Activated CD4-positive, alpha-beta T cell treated with anti-CD3 and anti-CD28 coated beads for 36 hours (primary cell): ENCODE measurements at regions of chr9 and their contacts with region 1.

Region 1: GRCh38 chr9:34376596-34377403 is at the start of gene MYORG:
- DNase-seq: peak; percentile 98
- ATAC-seq: peak; percentile 82
- H3K4me3 Mint-ChIP-seq: peak within 1 kb of the TSS; percentile 76
- H3K27ac Mint-ChIP-seq: peak within 1 kb of the TSS; percentile 62
- H3K4me1 Mint-ChIP-seq: peaks cover 36% of the 10 kb centered on the region
- H3K27me3 Mint-ChIP-seq: no peaks in the 10 kb centered on the region
- total RNA-seq, gene MYORG: 2.2 to 2.3 TPM

Region 2: GRCh38 chr9:34048923-34049697 is 327.7 kb before region 1 on chr9:
- CTCF ChIA-PET with region 1: interaction called, 3 read pairs
- POLR2A ChIA-PET with region 1: no interaction called
- intact Hi-C with region 1: loop called (anchors 1 kb)
- DNase-seq: peak; percentile 98
- ATAC-seq: peak; percentile 84
- H3K4me3 Mint-ChIP-seq: peak overlapping the region; percentile 90
- H3K27ac Mint-ChIP-seq: peak overlapping the region; percentile 99
- H3K4me1 Mint-ChIP-seq: peaks cover 38% of the 10 kb centered on the region
- H3K27me3 Mint-ChIP-seq: no peaks in the 10 kb centered on the region

Region 3: DNA sequence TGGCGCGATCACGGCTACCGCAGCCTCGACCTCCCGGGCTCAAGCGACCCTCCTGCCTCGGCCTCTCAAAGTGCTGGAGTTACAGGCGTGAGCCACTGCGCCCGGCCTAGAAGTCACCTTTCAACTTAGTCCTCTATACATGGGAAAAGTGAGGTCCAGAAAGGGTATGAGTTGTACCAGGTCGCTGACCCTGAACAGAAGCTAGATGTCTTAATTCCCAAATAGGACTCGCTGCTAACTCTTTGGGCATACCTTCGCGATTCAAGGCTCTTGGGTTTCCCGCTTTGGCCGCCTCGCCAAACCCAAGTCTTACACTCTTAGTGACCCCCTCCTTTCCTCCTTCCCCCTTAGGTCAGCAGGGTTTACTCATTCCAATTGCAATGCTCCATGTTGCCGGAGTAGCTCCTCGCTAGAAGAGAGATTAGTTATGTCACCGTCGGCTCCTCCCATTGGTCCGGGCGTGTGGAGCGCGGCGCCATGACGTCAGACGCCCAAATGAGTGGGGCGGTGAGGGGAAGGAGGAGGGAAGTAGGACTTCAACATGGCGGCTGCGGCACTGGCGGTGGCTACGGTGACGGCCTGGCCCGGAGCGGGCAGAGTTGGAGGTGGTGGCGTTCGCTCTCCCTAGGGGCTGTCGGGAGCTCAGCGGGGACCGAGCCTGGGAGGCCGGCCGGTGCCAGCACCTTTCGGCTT is 198.1 kb before region 1 on chr9 and contains the start of gene UBAP1:
- CTCF ChIA-PET with region 1: interaction called, 4 read pairs
- POLR2A ChIA-PET with region 1: no interaction called
- intact Hi-C with region 1: loop called (anchors 1 to 5 kb)
- DNase-seq: peak; percentile 98
- ATAC-seq: peak; percentile 97
- H3K4me3 Mint-ChIP-seq: peak within 1 kb of the TSS; percentile 93
- H3K27ac Mint-ChIP-seq: peak within 1 kb of the TSS; percentile 96
- H3K4me1 Mint-ChIP-seq: peaks cover 20% of the 10 kb centered on the region
- H3K27me3 Mint-ChIP-seq: no peaks in the 10 kb centered on the region
- total RNA-seq, gene UBAP1: 29.5 to 43.3 TPM

Region 4: GRCh38 chr9:34458013-34458958 is 81.5 kb after region 1 on chr9 and contains the starts of genes DNAI1 and FAM219A:
- CTCF ChIA-PET with region 1: interaction called, 4 read pairs
- POLR2A ChIA-PET with region 1: no interaction called
- intact Hi-C with region 1: loop called (anchors 1 kb)
- DNase-seq: peak; percentile 99
- ATAC-seq: peak; percentile 92
- H3K4me3 Mint-ChIP-seq: peak within 1 kb of the TSS; percentile 84
- H3K27ac Mint-ChIP-seq: peak within 1 kb of the TSS; percentile 75
- H3K4me1 Mint-ChIP-seq: peaks cover 45% of the 10 kb centered on the region
- H3K27me3 Mint-ChIP-seq: peaks cover 9% of the 10 kb centered on the region
- total RNA-seq, gene DNAI1: 0.34 TPM in 1 of 2 experiments, not detected in the other
- total RNA-seq, gene FAM219A: 9.7 to 12.9 TPM

Region 5: GRCh38 chr9:34611829-34612630 is 235.2 kb after region 1 on chr9 and contains the start of gene RPP25L:
- CTCF ChIA-PET with region 1: no interaction called
- POLR2A ChIA-PET with region 1: no interaction called
- intact Hi-C with region 1: loop called in 1 of 2 experiments (anchors 1 kb)
- DNase-seq: peak; percentile 91
- ATAC-seq: peak; percentile 97
- H3K4me3 Mint-ChIP-seq: peak within 1 kb of the TSS; percentile 86
- H3K27ac Mint-ChIP-seq: peak within 1 kb of the TSS; percentile 93
- H3K4me1 Mint-ChIP-seq: peaks cover 16% of the 10 kb centered on the region
- H3K27me3 Mint-ChIP-seq: no peaks in the 10 kb centered on the region
- total RNA-seq, gene RPP25L: 29.3 to 35.2 TPM

Region 6: GRCh38 chr9:34665381-34666250 is 288.8 kb after region 1 on chr9:
- CTCF ChIA-PET with region 1: no interaction called
- POLR2A ChIA-PET with region 1: no interaction called
- intact Hi-C with region 1: loop called in 1 of 2 experiments (anchors 1 kb)
- DNase-seq: peak; percentile 93
- ATAC-seq: peak; percentile 75
- H3K4me3 Mint-ChIP-seq: peak overlapping the region; percentile 77
- H3K27ac Mint-ChIP-seq: peak overlapping the region; percentile 87
- H3K4me1 Mint-ChIP-seq: peaks cover 33% of the 10 kb centered on the region
- H3K27me3 Mint-ChIP-seq: no peaks in the 10 kb centered on the region